CD4-positive, alpha-beta T cell (primary cell): ENCODE measurements at regions of chr15 and their contacts with region 1.

Region 1: GRCh38 chr15:49468440-49468839 is 45.4 kb downstream of the FGF7 start:
- DNase-seq: no peak
- ATAC-seq: no peak
- H3K4me3 ChIP-seq: no peak overlapping the region
- H3K4me3 Mint-ChIP-seq: no peak overlapping the region
- H3K27ac ChIP-seq: no peak overlapping the region
- H3K27ac Mint-ChIP-seq: no peak overlapping the region
- H3K4me1 ChIP-seq: no peaks in the 10 kb centered on the region
- H3K4me1 Mint-ChIP-seq: peaks cover 6% of the 10 kb centered on the region
- H3K27me3 ChIP-seq: no peaks in the 10 kb centered on the region
- H3K27me3 Mint-ChIP-seq: no peaks in the 10 kb centered on the region
- CTCF ChIP-seq: no peak

Region 2: DNA sequence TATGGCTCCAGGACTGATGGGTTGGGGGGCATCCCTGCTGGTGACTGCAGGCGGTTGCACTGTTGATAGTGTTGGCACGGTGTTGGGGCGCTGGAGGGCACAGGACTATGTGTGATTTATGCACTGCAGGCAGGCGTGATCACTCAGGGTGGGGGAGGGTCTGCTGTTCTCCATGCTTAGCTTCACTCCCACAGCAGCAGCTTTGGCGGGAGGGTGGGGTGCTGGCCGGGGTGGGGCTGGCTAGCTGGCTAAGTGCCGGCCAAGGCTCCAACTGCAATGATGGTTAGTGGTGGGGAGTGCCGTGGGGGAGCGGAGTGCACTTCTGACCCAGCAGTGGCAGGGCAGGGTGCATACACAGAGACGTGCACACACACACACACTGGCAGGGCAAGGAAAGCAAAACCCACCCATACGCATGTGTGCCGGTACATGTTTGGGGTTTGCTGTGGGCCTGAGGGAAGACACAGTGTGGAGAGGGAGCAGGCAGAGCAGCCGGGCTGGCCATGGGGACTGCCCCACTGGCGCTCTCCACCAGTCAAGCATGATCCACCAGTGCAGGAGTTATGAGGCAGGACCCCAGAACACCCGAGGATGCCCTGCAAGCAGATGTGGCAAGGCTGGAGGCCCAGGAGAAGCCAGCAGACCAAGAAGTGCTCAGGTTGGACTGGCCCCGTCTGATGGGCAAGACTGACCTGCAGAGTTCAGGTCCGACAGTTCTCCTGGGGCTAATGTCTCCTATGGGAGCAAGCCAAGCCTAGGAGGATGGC is 61.9 kb before region 1 on chr15:
- CTCF ChIA-PET with region 1: no interaction called
- POLR2A ChIA-PET with region 1: no interaction called
- intact Hi-C with region 1: loop called in 1 of 2 experiments (anchors 10 kb)
- DNase-seq: peak in 1 of 14 experiments; percentile 17
- ATAC-seq: no peak
- H3K4me3 ChIP-seq: no peak overlapping the region
- H3K4me3 Mint-ChIP-seq: no peak overlapping the region
- H3K27ac ChIP-seq: no peak overlapping the region
- H3K27ac Mint-ChIP-seq: no peak overlapping the region
- H3K4me1 ChIP-seq: no peaks in the 10 kb centered on the region
- H3K4me1 Mint-ChIP-seq: no peaks in the 10 kb centered on the region
- H3K27me3 ChIP-seq: peaks cover 0 to 2% of the 10 kb centered on the region in 2 experiments
- H3K27me3 Mint-ChIP-seq: peaks cover 4% of the 10 kb centered on the region
- CTCF ChIP-seq: no peak

Region 3: DNA sequence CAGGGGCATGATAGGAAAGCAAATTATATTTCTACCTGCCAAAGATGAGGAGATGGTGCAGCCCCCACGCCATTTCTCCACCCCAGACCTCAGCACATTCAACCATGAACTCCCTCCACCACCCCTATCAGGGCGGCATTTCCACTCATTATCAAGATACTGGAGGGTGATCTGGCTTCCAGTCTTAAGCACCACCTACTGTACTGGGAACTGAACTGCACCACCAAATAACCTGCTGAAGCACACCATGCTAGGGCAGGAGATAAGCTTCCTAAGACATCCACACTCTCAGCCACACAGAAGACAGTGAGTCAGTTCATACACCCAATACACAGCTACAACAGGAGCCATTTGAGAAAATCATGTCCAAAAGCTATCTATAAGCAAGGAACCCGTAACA is 53.4 kb after region 1 on chr15:
- CTCF ChIA-PET with region 1: no interaction called
- POLR2A ChIA-PET with region 1: no interaction called
- intact Hi-C with region 1: loop called in 1 of 2 experiments (anchors 10 kb)
- DNase-seq: no peak
- ATAC-seq: no peak
- H3K4me3 ChIP-seq: no peak overlapping the region
- H3K4me3 Mint-ChIP-seq: no peak overlapping the region
- H3K27ac ChIP-seq: no peak overlapping the region
- H3K27ac Mint-ChIP-seq: no peak overlapping the region
- H3K4me1 ChIP-seq: no peaks in the 10 kb centered on the region
- H3K4me1 Mint-ChIP-seq: no peaks in the 10 kb centered on the region
- H3K27me3 ChIP-seq: peaks cover 0 to 5% of the 10 kb centered on the region in 2 experiments
- H3K27me3 Mint-ChIP-seq: no peaks in the 10 kb centered on the region
- CTCF ChIP-seq: no peak

Region 4: GRCh38 chr15:49675041-49675440 is 206.6 kb after region 1 on chr15:
- CTCF ChIA-PET with region 1: no interaction called
- POLR2A ChIA-PET with region 1: no interaction called
- intact Hi-C with region 1: loop called in 1 of 2 experiments (anchors 10 kb)
- DNase-seq: no peak
- ATAC-seq: no peak
- H3K4me3 ChIP-seq: no peak overlapping the region
- H3K4me3 Mint-ChIP-seq: no peak overlapping the region
- H3K27ac ChIP-seq: no peak overlapping the region
- H3K27ac Mint-ChIP-seq: no peak overlapping the region
- H3K4me1 ChIP-seq: no peaks in the 10 kb centered on the region
- H3K4me1 Mint-ChIP-seq: no peaks in the 10 kb centered on the region
- H3K27me3 ChIP-seq: no peaks in the 10 kb centered on the region
- H3K27me3 Mint-ChIP-seq: peaks cover 18% of the 10 kb centered on the region
- CTCF ChIP-seq: no peak